ENCODE measurements at regions of chr14 and their contacts with region 1.

Region 1: DNA sequence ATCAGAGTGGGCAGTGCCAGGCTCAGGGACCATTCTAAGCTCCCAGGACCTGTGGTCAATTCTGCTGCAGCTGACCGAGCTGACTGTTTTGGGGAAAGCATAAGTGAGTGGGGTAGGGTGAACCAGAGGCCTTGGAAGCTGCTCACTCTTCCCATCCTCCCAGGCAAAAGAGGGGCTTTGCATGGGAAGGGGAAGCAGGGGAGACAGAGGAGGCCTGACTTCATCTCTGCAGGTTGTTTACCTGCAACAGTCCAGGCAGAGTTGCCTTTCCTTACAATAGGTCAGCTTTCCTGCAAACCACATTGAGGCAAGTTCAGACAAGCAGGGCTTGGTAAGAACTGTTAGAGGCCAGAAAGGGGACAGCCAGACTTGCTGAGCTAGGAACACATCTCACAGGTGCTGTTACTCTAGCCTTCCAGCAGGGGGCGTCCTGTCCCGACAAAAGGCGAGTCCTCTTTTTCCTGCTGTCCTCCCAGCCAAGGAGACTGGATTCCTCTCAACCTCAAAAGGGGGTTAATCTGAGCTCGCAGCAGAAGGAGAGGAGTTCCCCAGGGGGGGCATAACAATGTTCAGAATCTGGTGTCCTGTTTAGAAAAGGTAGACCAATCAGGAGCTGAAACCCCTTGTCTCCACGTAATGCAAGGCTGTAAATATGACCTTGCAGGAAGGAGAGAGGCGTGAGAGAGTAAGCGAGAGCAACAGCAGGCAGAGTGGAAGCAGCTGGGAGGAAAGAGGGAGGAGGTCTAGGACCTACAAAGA is 4.3 kb upstream of the DHRS2 start:
- DNase-seq: peak; percentile 84
- H3K4me3 ChIP-seq: no peak overlapping the region
- H3K27ac ChIP-seq: no peak overlapping the region
- H3K4me1 ChIP-seq: peaks cover 0 to 12% (median 4%) of the 10 kb centered on the region in 4 donors
- H3K27me3 ChIP-seq: no peaks in the 10 kb centered on the region
- CTCF ChIP-seq: peak; percentile 85 to 92 (median 90)
- EP300 ChIP-seq: no peak
- POLR2A ChIP-seq: no peak

Region 2: DNA sequence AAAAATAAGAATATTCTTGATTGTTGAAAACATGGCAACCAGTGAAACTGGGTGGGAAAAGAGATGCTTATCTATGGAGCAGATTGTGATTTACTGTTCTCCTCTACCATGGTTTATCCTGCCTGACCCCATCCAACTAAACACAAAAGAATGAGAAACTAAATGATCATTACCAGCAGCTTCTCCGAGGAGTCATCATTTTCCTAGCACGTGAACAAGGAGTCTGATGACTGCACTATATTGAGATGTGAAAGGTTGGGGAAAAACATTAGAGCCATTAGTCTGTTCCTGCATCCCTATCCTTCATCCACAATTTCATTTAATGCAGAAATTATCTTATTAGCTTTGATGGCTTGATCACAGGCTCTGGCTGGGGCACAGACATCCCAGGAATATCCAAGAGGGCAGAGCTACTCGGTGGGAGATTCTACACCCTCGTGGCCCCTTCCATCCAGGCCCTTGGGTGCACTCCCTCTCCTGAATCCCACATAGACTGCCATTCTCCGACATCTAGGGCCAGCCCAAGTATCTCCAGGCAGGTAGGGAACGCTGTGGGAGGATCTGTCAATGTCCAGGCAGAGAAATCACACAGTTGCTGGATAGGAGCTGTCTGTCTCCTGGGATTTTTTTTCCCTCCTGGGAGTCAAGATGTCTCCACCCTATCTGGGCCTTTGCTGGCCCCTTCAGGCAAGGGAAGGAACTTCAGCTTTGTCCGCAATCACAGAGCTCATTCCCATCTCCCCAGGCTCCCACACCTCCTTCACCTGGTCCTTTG is 278.4 kb after region 1 on chr14:
- intact Hi-C with region 1: loop called (anchors 1 kb)
- DNase-seq: no peak
- H3K4me3 ChIP-seq: no peak overlapping the region
- H3K27ac ChIP-seq: no peak overlapping the region
- H3K4me1 ChIP-seq: no peaks in the 10 kb centered on the region
- H3K27me3 ChIP-seq: no peaks in the 10 kb centered on the region
- CTCF ChIP-seq: peak; percentile 28 to 82 (median 74)
- EP300 ChIP-seq: no peak
- POLR2A ChIP-seq: no peak

Region 3: DNA sequence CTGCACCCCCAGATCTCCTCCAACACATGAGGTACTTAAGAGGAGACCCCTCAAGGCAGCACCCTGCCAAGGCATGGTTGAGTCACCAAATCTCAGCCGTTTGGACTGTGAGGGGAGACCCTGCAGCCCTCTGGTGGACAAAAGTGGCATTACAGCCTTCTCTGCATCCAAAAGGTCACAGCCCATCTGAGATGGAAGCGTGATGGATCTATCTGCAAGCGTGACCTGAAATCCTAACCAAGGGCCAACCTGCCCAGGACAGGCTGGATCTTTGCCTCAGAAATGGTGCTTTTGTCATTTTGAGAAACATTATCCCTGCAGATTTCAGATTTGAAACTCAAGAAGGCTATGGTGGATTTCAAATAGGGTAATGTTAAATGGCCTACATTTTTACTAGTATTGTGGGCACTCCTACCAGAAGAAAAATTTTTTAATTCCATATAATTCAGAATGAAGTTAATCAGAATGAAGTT is 298.0 kb after region 1 on chr14:
- intact Hi-C with region 1: loop called (anchors 1 kb)
- DNase-seq: peak; percentile 85
- H3K4me3 ChIP-seq: no peak overlapping the region
- H3K27ac ChIP-seq: peak overlapping the region in 2 of 4 donors; percentile 43 to 47
- H3K4me1 ChIP-seq: peaks cover 0 to 31% (median 22%) of the 10 kb centered on the region in 4 donors
- H3K27me3 ChIP-seq: no peaks in the 10 kb centered on the region
- CTCF ChIP-seq: peak; percentile 40 to 89 (median 64)
- EP300 ChIP-seq: no peak
- POLR2A ChIP-seq: no peak

Region 4: GRCh38 chr14:23953464-23954278 is 321.8 kb after region 1 on chr14 and contains the start of gene DHRS4:
- intact Hi-C with region 1: loop called (anchors 5 kb)
- DNase-seq: peak; percentile 90
- H3K4me3 ChIP-seq: peak within 1 kb of the TSS; percentile 55 to 78 (median 68)
- H3K27ac ChIP-seq: peak within 1 kb of the TSS; percentile 81 to 93 (median 86)
- H3K4me1 ChIP-seq: peaks cover 0 to 30% (median 28%) of the 10 kb centered on the region in 4 donors
- H3K27me3 ChIP-seq: no peaks in the 10 kb centered on the region
- CTCF ChIP-seq: peak; percentile 78 to 88 (median 86)
- EP300 ChIP-seq: no peak
- POLR2A ChIP-seq: peak in 1 of 2 donors; percentile 45
- total RNA-seq, gene DHRS4: 23.8 to 52.4 (median 37.8) TPM

Region 5: DNA sequence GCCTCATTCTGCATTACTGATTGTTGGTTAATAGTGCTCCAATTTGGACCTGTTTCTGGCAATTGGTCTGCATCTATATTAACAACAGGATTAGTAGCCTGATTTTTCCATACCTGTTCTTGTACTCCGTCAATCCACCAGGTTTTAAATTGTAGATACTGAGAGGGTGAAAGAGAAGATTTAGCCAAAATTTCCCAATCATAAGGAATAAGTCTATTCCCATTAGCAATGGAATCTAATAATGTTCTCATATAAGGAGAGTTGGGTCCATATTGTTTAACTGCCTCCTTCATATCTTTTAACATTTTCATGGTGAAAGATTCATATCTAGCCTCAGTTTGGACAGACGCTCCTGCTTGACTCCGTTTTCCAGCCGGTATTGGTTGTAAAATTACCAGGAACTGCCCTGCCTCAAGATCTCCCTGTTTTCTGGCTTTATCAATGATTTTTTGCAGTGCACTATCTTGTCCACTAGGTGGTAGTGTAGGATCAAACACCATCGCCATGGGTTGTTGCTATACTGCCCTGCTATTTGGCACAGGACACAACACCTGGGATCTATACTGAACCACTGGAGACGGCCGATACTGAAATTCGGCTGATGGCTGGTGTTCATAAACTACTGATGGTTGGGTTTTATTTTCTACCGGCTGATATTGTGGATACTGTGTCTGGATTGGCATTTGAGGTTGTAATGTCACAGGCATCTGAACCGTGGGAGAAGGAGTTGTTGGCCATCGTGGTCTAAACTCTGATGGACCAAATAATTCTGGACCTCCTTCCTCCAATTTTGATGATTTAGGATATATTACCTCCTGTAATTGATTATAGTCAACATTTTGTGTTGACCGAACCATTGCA is 382.0 kb after region 1 on chr14:
- intact Hi-C with region 1: loop called (anchors 10 kb)
- DNase-seq: peak; percentile 72
- H3K4me3 ChIP-seq: no peak overlapping the region
- H3K27ac ChIP-seq: no peak overlapping the region
- H3K4me1 ChIP-seq: peaks cover 0 to 4% (median 2%) of the 10 kb centered on the region in 4 donors
- H3K27me3 ChIP-seq: no peaks in the 10 kb centered on the region
- CTCF ChIP-seq: peak; percentile 88 to 94 (median 93)
- EP300 ChIP-seq: no peak
- POLR2A ChIP-seq: no peak

Measured in sigmoid colon (tissue), 7 donors.